Calu3 (cell line): ENCODE measurements at regions of chr15 and their contacts with region 1.

Region 1: DNA sequence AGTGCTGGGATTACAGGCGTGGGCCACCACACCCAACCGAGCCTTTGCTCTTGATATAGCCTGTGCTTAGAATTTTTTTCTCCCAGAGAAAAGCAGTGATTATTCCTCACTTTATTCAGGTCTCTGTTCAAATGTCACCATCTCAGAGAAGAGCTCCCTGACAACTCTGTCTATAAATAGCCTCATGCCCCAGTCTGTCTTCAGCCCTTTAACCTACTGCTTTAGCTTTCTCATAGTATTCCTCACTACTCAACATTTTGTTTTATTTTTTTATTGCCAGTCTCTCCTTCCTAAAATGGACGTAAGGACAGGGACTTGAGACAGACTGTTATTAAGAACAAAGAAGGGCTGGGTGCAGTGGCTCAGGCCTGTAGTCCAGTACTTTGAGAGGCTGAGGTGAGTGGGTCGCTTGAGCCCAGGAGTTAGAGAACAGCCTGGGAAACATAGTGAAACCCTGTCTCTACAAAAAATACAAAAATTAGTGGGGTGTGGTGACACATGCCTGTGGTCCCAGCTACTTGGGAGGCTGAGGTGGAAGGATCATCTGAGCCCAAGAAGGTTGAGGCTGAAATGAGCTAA is 78.7 kb upstream of the TTBK2 start:
- DNase-seq: no peak
- H3K4me3 Mint-ChIP-seq: no peak overlapping the region
- H3K27ac Mint-ChIP-seq: no peak overlapping the region
- H3K4me1 Mint-ChIP-seq: peaks cover 7% of the 10 kb centered on the region
- H3K27me3 Mint-ChIP-seq: no peaks in the 10 kb centered on the region
- CTCF ChIP-seq: no peak

Region 2: DNA sequence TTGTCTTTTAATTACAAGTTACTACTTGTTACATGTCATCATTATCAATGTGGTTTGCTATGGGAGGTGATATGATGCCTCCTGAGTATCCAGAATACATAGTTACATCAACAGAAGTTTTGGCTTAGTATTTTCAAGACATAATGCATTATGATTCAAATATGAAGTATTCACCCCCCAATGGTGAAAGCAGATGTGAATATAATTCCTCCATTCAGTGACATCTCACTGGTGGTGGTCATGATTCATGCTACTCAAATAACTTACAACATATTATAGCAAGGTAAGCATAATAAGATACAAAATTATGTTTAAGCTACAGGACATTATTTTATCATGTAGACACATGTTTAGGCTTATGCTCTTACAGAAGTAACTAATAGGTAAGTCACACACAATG is 43.8 kb before region 1 on chr15:
- CTCF ChIA-PET with region 1: no interaction called
- intact Hi-C with region 1: loop called (anchors 2 kb)
- DNase-seq: no peak
- H3K4me3 Mint-ChIP-seq: no peak overlapping the region
- H3K27ac Mint-ChIP-seq: no peak overlapping the region
- H3K4me1 Mint-ChIP-seq: no peaks in the 10 kb centered on the region
- H3K27me3 Mint-ChIP-seq: no peaks in the 10 kb centered on the region
- CTCF ChIP-seq: no peak

Region 3: GRCh38 chr15:43067717-43068461 is 68.6 kb after region 1 on chr15:
- CTCF ChIA-PET with region 1: no interaction called
- intact Hi-C with region 1: no loop called
- DNase-seq: no peak
- H3K4me3 Mint-ChIP-seq: no peak overlapping the region
- H3K27ac Mint-ChIP-seq: no peak overlapping the region
- H3K4me1 Mint-ChIP-seq: no peaks in the 10 kb centered on the region
- H3K27me3 Mint-ChIP-seq: no peaks in the 10 kb centered on the region
- CTCF ChIP-seq: no peak